AG04449 (cell line): ENCODE measurements at regions of chr6 and their contacts with region 1.

Region 1: DNA sequence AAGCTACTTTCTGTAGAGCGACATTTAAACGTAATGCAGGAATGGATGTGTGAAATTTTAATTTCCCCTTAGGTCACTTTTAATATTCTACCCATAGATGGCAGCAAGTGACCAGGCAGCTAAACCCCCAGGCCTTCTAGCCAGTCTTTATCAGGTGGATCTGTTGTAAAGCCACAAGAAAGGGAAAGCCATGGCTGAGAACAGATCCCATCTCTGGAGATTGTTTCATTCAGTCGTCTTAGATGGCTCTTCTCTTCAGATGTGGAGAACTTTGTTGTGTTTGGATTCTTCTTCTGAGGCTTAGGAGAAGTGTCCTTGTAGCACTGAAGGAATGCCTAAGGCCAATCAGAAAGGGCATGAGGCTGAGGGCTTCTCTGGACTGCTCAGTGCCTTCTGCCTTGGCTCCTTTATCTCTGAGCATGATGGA is 15.8 kb upstream of the RNF182 start:
- DNase-seq: peak; percentile 38
- H3K4me3 ChIP-seq: no peak overlapping the region
- CTCF ChIP-seq: peak; percentile 47

Region 2: DNA sequence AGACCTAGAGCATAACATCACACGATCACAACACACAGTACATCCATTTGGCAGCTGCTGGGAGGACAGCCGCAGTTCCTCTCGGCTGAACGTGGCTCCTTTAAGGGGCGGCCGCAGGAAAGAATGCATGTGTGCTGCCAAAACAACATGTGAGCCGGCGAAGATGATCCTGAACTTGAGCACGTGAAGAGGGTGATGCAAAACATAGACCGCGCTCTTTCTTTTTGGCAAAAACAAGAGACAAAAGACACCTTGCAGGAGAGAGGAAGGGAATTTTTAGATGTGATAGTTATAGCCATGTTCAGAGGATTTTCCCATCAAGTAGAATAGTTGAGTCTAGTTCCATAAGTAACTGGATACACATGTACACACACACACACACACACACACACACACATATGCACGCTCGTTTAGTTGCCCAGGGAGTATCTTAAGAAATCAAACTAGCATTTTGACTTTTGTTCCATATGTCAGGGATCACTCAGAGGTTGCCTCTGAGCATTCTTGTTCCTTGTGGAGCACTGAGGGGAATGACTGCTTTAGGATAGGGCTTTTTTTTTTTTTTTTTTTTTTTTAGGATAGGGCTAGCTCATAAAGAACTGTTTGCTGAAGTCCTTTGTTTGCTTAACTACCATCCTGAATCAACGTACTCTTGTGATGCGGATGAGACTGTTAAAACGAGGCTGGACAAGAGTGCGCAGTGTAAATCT is 175.6 kb before region 1 on chr6:
- CTCF ChIA-PET with region 1: no interaction called
- POLR2A ChIA-PET with region 1: no interaction called
- DNase-seq: peak; percentile 64
- H3K4me3 ChIP-seq: peak overlapping the region; percentile 38
- CTCF ChIP-seq: no peak

Region 3: DNA sequence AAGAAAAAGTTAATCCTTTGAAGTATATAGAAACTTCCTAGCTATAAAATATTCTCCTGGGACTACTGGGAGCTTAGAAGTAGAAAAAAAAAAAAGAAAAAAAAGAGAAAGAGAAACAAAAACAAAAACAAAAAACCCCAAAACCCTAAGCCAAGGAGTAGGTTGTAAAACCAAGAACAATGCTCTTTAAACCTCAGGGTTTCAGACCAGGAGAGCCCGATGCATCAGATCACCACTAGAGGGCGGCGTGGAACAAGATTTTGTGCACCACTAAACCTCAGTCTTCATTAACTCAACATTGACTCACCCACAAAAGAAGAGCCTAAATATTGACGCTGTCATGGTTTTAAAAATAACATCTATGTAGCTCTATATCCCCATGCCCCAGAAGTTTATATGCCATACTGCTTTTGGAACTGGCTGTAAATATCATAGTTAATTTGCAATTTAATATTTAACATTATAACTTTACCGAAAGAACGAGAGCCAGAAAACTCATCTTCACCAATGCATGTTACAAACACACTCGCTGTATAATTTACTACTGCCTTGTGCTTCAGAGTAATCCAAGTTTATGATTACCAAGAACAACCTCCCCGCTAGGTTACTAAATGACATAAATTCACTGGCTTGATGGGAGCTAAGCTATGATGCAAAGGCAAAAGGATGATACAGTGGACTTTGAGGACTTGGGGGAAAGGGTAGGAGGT is 113.8 kb before region 1 on chr6:
- CTCF ChIA-PET with region 1: interaction called, 12 read pairs
- POLR2A ChIA-PET with region 1: no interaction called
- DNase-seq: peak; percentile 31
- H3K4me3 ChIP-seq: no peak overlapping the region
- CTCF ChIP-seq: peak; percentile 87

Region 4: GRCh38 chr6:13892007-13892645 is 16.8 kb before region 1 on chr6:
- CTCF ChIA-PET with region 1: interaction called, 24 read pairs
- POLR2A ChIA-PET with region 1: no interaction called
- DNase-seq: no peak
- H3K4me3 ChIP-seq: no peak overlapping the region
- CTCF ChIP-seq: no peak

Region 5: GRCh38 chr6:14037402-14038277 is 128.7 kb after region 1 on chr6:
- CTCF ChIA-PET with region 1: interaction called, 467 read pairs
- POLR2A ChIA-PET with region 1: no interaction called
- DNase-seq: no peak
- H3K4me3 ChIP-seq: no peak overlapping the region
- CTCF ChIP-seq: no peak

Region 6: DNA sequence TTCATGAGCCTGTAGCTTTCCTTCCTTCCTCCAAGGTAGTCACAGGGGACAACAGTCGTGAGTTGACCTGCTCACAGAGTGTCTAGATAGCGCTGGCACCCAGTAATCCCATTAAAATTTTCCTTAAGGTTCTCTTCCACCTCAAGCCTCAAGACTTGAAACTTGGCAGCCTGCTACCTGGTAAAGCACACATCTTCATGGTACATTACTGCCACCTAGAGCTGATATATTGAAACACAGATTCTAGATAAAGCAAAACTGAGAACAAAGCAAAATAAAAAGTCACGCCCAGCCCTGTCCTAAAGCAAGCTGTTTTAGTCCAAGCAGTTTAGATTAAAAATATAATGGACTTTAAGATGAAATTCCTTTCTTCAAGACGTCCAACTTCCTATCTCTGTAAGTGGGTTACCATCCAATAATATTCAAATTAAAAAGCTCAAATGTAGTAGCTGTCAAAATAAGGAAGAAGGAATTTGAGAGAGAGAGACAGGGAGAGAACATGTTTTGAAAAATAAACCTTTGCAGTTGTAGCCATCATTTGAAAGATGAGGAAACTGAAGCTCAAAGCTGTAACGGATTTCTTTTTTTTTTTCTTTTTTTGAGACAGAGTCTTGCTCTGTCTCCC is 157.9 kb after region 1 on chr6:
- CTCF ChIA-PET with region 1: interaction called, 530 read pairs
- POLR2A ChIA-PET with region 1: interaction called, 4 read pairs
- DNase-seq: peak; percentile 45
- H3K4me3 ChIP-seq: no peak overlapping the region
- CTCF ChIP-seq: peak; percentile 41

Region 7: GRCh38 chr6:14144678-14145113 is 235.7 kb after region 1 on chr6:
- CTCF ChIA-PET with region 1: interaction called, 134 read pairs
- POLR2A ChIA-PET with region 1: no interaction called
- DNase-seq: no peak
- H3K4me3 ChIP-seq: no peak overlapping the region
- CTCF ChIP-seq: peak; percentile 95